CD4-positive, alpha-beta T cell (primary cell): ENCODE measurements at regions of chr1 and their contacts with region 1.

Region 1: DNA sequence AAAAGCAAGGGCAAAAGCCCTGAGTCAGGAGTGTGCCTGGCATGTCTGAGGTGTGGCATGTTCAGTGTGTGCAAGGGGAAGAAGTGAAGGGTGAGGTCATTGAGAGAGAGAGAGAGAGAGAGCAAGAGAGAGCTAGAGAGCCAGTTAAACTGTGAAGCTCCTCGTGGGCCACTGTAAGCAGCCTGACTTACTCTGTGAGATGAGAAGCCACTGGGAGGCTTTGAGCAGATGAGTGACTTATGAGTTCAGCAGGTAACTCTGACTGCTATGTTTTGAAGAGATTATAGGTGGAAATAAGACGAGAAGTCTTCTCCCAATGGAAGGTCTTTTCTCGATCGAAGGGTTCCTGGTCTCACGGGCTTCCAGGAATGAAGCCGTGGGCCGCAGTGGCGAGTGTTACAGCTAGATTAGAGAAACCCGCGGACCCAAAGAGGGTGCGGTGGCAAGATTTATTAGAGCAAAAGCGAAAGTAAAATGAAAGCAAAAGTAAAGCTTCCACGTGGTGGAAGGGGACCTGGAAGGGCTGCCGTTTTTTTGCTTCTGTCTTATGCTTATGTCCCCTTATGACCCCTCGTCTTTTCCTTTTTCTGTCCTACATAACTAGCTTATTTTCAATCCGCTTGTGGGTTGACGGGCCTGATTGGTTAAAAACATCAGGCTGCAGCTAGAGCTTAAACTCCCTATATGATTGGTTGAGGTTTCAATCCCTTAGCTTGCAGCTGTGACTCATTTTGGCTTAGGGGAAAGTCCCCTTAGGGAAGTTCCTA is 323.1 kb upstream of the FAM78B start:
- DNase-seq: peak; percentile 6 to 85 (median 32)
- ATAC-seq: peak; percentile 88
- H3K4me3 ChIP-seq: peak overlapping the region; percentile 66
- H3K4me3 Mint-ChIP-seq: no peak overlapping the region
- H3K27ac ChIP-seq: peak overlapping the region; percentile 71 to 91
- H3K27ac Mint-ChIP-seq: no peak overlapping the region
- H3K4me1 ChIP-seq: peaks cover 21% of the 10 kb centered on the region
- H3K4me1 Mint-ChIP-seq: no peaks in the 10 kb centered on the region
- H3K27me3 ChIP-seq: no peaks in the 10 kb centered on the region
- H3K27me3 Mint-ChIP-seq: no peaks in the 10 kb centered on the region
- CTCF ChIP-seq: no peak

Region 2: DNA sequence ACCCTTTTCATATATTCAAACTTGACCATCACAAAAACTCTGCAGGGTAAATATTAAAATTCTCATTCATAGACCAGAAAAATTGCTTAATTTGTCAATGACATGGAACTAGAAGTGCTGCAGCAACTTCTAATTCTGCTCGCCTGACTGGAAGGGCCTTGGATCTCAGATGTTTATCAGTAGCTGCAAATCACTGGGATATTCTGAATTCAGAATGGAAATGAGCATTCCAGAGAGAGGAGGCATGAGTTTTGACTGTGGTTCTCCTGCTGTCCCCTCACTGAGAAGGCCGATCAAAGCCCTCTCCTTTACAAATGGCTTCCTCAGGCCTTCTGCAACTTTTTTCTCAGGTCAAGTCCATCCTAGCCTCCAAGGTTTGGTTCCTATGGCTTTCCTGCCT is 151.7 kb before region 1 on chr1:
- CTCF ChIA-PET with region 1: no interaction called
- POLR2A ChIA-PET with region 1: no interaction called
- intact Hi-C with region 1: no loop called
- DNase-seq: no peak
- ATAC-seq: no peak
- H3K4me3 ChIP-seq: no peak overlapping the region
- H3K4me3 Mint-ChIP-seq: no peak overlapping the region
- H3K27ac ChIP-seq: no peak overlapping the region
- H3K27ac Mint-ChIP-seq: no peak overlapping the region
- H3K4me1 ChIP-seq: no peaks in the 10 kb centered on the region
- H3K4me1 Mint-ChIP-seq: no peaks in the 10 kb centered on the region
- H3K27me3 ChIP-seq: no peaks in the 10 kb centered on the region
- H3K27me3 Mint-ChIP-seq: peaks cover 9% of the 10 kb centered on the region
- CTCF ChIP-seq: no peak

Region 3: GRCh38 chr1:166457700-166458099 is 32.2 kb before region 1 on chr1:
- CTCF ChIA-PET with region 1: no interaction called
- POLR2A ChIA-PET with region 1: no interaction called
- intact Hi-C with region 1: no loop called
- DNase-seq: no peak
- ATAC-seq: no peak
- H3K4me3 ChIP-seq: no peak overlapping the region
- H3K4me3 Mint-ChIP-seq: no peak overlapping the region
- H3K27ac ChIP-seq: no peak overlapping the region
- H3K27ac Mint-ChIP-seq: no peak overlapping the region
- H3K4me1 ChIP-seq: no peaks in the 10 kb centered on the region
- H3K4me1 Mint-ChIP-seq: no peaks in the 10 kb centered on the region
- H3K27me3 ChIP-seq: no peaks in the 10 kb centered on the region
- H3K27me3 Mint-ChIP-seq: no peaks in the 10 kb centered on the region
- CTCF ChIP-seq: no peak

Region 4: GRCh38 chr1:166479052-166479631 is 10.7 kb before region 1 on chr1:
- CTCF ChIA-PET with region 1: interaction called, 13 read pairs
- POLR2A ChIA-PET with region 1: interaction called, 10 read pairs
- intact Hi-C with region 1: no loop called
- DNase-seq: peak in 12 of 14 experiments; percentile 12 to 72 (median 44)
- ATAC-seq: peak; percentile 29
- H3K4me3 ChIP-seq: no peak overlapping the region
- H3K4me3 Mint-ChIP-seq: no peak overlapping the region
- H3K27ac ChIP-seq: no peak overlapping the region
- H3K27ac Mint-ChIP-seq: no peak overlapping the region
- H3K4me1 ChIP-seq: no peaks in the 10 kb centered on the region
- H3K4me1 Mint-ChIP-seq: no peaks in the 10 kb centered on the region
- H3K27me3 ChIP-seq: no peaks in the 10 kb centered on the region
- H3K27me3 Mint-ChIP-seq: no peaks in the 10 kb centered on the region
- CTCF ChIP-seq: peak; percentile 89

Region 5: DNA sequence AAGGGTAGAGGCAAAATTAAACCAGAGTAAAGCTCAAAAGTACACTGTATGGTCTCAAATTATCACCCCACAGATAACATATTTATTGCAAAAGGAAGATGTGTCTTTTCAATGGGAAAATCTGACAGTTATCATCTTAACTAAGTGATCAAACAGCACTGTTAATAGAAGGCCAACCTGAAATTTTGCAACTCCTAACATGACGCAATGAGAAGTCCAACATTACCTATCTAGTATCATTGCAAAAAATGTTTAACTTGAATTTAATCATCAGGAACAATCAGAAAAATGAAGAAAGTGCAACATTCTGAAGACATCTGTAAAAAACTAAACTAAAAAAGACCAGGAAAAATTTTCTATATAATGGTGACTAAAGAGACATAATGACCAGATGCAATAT is 192.7 kb after region 1 on chr1:
- CTCF ChIA-PET with region 1: no interaction called
- POLR2A ChIA-PET with region 1: no interaction called
- intact Hi-C with region 1: no loop called
- DNase-seq: no peak
- ATAC-seq: no peak
- H3K4me3 ChIP-seq: no peak overlapping the region
- H3K4me3 Mint-ChIP-seq: no peak overlapping the region
- H3K27ac ChIP-seq: no peak overlapping the region
- H3K27ac Mint-ChIP-seq: no peak overlapping the region
- H3K4me1 ChIP-seq: no peaks in the 10 kb centered on the region
- H3K4me1 Mint-ChIP-seq: no peaks in the 10 kb centered on the region
- H3K27me3 ChIP-seq: peaks cover 3 to 5% of the 10 kb centered on the region in 2 experiments
- H3K27me3 Mint-ChIP-seq: peaks cover 41% of the 10 kb centered on the region
- CTCF ChIP-seq: no peak

Region 6: DNA sequence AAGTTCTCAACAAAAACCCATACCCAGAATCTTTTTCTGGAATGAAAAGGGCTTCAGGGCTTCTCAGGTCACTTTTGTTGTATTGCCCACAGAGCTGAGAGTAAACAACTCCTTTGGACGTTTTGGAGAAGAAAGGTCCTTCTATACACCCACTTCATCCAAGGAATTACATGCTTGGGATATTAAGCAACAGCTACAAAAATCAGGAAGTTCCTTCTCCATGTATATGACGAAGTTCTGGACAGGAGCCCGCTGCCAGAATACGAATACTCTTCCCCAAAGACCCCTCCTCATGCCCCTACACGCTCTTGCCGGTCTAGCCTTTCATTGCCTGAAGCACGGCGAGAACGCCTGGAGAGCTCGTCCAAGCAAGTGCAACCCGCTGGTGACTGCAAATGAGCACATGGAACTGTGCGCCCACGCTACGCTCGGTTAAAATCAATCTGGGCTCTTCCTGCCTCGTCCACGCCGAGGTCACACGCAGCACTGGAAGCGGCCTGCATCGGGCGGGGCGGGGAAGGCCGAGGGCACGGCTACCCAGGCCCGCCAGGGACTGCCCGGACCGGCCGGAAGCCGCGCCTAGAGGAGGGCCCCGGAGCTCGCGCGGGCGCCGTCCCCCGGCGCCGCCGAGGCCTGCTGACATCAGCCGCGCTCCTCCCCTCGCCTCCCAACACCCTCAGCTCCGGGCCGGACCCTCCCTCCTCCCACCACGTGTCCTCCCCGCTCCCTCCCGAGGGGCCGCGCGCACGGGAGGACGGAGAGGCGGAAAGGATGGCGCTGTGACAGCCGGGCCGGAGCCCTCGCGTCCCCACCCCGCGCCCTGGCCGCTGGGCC is 349.1 kb after region 1 on chr1 and contains the start of gene POGK:
- CTCF ChIA-PET with region 1: no interaction called
- POLR2A ChIA-PET with region 1: interaction called, 4 read pairs
- intact Hi-C with region 1: loop called in 1 of 2 experiments (anchors 5 kb)
- DNase-seq: peak; percentile 61 to 94 (median 78)
- ATAC-seq: peak; percentile 87
- H3K4me3 ChIP-seq: peak within 1 kb of the TSS; percentile 67
- H3K4me3 Mint-ChIP-seq: peak within 1 kb of the TSS; percentile 91
- H3K27ac ChIP-seq: peak within 1 kb of the TSS; percentile 56 to 79
- H3K27ac Mint-ChIP-seq: peak within 1 kb of the TSS; percentile 87
- H3K4me1 ChIP-seq: peaks cover 46% of the 10 kb centered on the region
- H3K4me1 Mint-ChIP-seq: peaks cover 53% of the 10 kb centered on the region
- H3K27me3 ChIP-seq: no peaks in the 10 kb centered on the region
- H3K27me3 Mint-ChIP-seq: no peaks in the 10 kb centered on the region
- CTCF ChIP-seq: no peak
- total RNA-seq, gene POGK: 16.1 to 17.6 TPM